Mucosa of descending colon (tissue), 3 donors: ENCODE measurements at regions of chr1 and their contacts with region 1.

Region 1: GRCh38 chr1:178310685-178311105 is 186.1 kb downstream of the CLEC20A start:
- DNase-seq: peak in 1 of 3 donors; percentile 14
- ATAC-seq: peak; percentile 92
- H3K4me3 ChIP-seq: no peak overlapping the region
- H3K4me1 ChIP-seq: no peaks in the 10 kb centered on the region
- CTCF ChIP-seq: peak; percentile 45

Region 2: DNA sequence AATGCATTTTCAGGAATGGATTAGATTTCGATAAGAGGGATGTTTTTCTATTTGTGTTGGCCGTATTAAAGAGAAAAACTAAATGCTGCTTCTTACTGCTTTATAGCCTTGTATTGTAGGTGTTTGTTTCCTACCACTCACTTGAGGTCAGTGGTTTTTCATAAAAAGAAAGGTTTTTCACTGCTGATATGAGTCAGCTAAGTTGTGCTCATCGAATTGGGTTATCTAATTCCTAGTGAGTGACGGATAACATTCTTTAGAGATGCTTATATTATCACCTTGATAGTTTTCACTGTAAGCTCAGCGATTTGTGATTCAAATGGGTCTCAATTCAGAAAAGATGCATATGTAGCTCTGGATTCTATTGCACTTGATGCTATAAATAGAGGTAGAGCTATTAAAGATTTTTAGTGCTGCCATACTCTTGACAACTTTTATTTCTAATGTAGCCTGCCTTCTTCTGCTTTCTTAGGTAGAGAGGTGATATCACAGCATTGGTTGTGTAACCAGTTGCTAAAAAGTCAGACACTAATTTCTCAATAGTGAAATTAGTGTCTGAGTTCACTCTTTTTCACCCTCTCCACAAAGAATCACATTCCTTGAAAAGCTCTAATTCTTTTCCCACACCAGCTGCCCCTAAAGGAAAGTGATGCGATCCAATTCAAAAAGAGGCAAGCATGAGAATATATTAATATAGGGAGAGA is 36.8 kb before region 1 on chr1:
- intact Hi-C with region 1: no loop called
- DNase-seq: no peak
- ATAC-seq: no peak
- H3K4me3 ChIP-seq: no peak overlapping the region
- H3K4me1 ChIP-seq: no peaks in the 10 kb centered on the region
- CTCF ChIP-seq: no peak

Region 3: GRCh38 chr1:178501705-178502329 is 191.1 kb after region 1 on chr1:
- intact Hi-C with region 1: loop called (anchors 5 to 10 kb)
- DNase-seq: peak; percentile 59 to 82 (median 78)
- ATAC-seq: peak; percentile 80
- H3K4me3 ChIP-seq: no peak overlapping the region
- H3K4me1 ChIP-seq: no peaks in the 10 kb centered on the region
- CTCF ChIP-seq: peak; percentile 92